ENCODE measurements at regions of chr13 and their contacts with region 1.

Region 1: DNA sequence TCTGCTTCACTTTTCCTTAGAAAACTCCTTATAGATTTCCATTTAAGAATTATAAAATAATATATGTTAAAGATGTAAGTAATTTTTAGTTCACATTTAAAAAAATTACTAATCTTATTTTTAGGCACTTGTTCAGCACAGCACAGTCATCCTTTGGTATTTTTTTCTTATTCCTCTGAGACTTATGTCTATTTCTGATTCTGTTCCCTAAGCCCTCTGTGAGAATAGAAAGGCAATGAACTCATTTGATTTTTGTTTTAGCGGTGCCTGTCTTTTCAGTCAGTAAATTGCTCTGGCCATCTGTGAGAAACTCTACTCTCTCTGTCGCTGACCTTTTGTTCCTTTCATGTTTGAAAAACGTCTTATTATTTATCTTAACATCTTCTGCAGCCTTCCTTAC is 168.1 kb downstream of the PCDH17 start:
- DNase-seq: no peak
- ATAC-seq: no peak

Region 2: GRCh38 chr13:57629821-57630235 is 169.8 kb before region 1 on chr13:
- intact Hi-C with region 1: loop called (anchors 5 kb)
- DNase-seq: peak; percentile 87
- ATAC-seq: peak; percentile 81